Motor neuron (in vitro differentiated cells): ENCODE measurements at regions of chr7 and their contacts with region 1.

Region 1: DNA sequence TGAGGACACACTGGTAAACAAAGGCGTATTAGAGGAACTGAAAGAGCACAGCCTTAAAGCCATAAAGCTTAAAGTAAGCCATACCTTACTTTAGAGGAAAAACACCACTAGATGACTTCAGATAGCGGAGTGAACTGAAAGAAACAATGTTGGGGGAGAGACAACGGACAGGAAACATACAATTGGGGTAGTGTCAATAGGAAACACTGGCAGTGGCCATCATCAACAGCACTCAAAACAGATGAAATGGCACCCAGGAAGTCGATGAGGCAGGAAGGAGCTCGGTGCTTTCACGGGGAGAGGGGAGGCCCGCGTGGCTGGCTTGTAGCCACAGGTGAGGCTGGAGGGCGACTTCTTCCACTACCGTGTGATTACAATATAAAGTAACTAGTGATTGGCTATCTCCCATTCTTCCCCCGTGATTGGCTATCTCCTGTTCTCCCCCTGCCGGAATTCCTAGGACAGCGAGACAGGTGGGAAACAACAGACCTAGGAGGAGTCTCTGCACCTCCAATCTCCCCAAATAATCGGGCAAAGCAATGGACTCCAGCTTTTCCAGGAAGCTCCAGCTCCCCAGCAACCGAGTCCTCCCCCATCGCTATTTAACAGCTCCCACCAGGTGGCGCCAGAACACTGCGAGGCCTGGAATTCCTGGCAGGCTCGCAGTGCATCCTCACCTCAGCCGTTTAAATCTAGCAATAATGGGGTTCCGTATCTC is 2.4 kb upstream of the TAS2R38 start:
- ATAC-seq: peak; percentile 56 to 97 (median 76)
- H3K4me3 ChIP-seq: peak overlapping the region; percentile 10 to 24 (median 19)
- H3K27ac ChIP-seq: no peak overlapping the region
- H3K4me1 ChIP-seq: no peaks in the 10 kb centered on the region

Region 2: DNA sequence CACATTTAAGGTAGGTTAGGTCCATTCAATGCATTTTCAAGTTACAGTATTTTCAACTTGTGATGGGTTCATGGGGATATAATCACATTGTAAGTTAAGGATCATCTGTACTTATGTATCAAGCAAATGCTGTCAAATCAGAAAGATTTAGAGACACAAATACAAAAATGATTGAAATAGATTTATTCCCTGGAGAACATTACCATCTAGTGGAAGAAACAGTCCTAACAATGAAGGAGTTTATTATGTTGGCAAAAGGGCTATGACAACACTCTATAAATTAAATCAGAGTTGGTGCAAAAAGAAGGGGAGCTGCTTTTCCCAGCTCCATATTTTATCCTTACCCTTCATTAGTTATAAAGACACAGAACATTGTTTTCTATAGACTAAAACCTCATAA is 212.9 kb after region 1 on chr7:
- in situ Hi-C with region 1: loop called in 3 of 9 experiments (anchors 10 to 25 kb)
- ATAC-seq: no peak
- H3K4me3 ChIP-seq: no peak overlapping the region
- H3K27ac ChIP-seq: no peak overlapping the region
- H3K4me1 ChIP-seq: no peaks in the 10 kb centered on the region